ENCODE measurements at regions of chr6 and their contacts with region 1.

Region 1: GRCh38 chr6:160221423-160221822 is 37.2 kb downstream of the SLC22A2 start:
- DNase-seq: peak; percentile 54
- H3K4me3 Mint-ChIP-seq: no peak overlapping the region
- H3K27ac Mint-ChIP-seq: no peak overlapping the region
- H3K4me1 Mint-ChIP-seq: no peaks in the 10 kb centered on the region
- H3K27me3 Mint-ChIP-seq: peaks cover 17% of the 10 kb centered on the region
- CTCF ChIP-seq: peak; percentile 28

Region 2: GRCh38 chr6:160088069-160088783 is 133.2 kb before region 1 on chr6:
- CTCF ChIA-PET with region 1: interaction called, 10 read pairs
- POLR2A ChIA-PET with region 1: interaction called, 4 read pairs
- intact Hi-C with region 1: loop called (anchors 1 kb)
- DNase-seq: peak; percentile 76
- H3K4me3 Mint-ChIP-seq: no peak overlapping the region
- H3K27ac Mint-ChIP-seq: no peak overlapping the region
- H3K4me1 Mint-ChIP-seq: no peaks in the 10 kb centered on the region
- H3K27me3 Mint-ChIP-seq: no peaks in the 10 kb centered on the region
- CTCF ChIP-seq: peak; percentile 68

Region 3: GRCh38 chr6:160137989-160138835 is 83.2 kb before region 1 on chr6:
- CTCF ChIA-PET with region 1: interaction called, 19 read pairs
- POLR2A ChIA-PET with region 1: interaction called, 3 read pairs
- intact Hi-C with region 1: loop called (anchors 1 kb)
- DNase-seq: peak; percentile 73
- H3K4me3 Mint-ChIP-seq: no peak overlapping the region
- H3K27ac Mint-ChIP-seq: no peak overlapping the region
- H3K4me1 Mint-ChIP-seq: peaks cover 25% of the 10 kb centered on the region
- H3K27me3 Mint-ChIP-seq: no peaks in the 10 kb centered on the region
- CTCF ChIP-seq: peak; percentile 80

Region 4: DNA sequence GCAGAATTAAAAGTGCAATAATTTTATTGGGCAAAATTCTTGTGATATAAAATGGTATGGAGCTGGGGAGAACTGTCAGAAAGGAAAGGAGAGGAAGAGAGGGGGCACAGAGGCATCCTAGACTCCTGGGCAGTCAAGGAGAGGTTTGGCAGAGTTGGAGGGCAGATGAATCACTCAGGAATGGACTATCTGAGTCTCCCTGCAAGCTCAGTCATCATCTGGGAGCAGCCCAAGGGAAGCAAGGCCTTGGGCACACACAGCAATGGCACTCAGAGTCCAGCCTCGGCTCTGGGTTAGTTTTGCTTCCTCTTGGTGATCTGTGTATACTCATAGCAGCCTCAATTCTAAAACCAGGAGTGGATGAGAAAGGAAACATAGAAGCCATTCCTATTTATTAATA is 32.6 kb before region 1 on chr6:
- CTCF ChIA-PET with region 1: interaction called, 11 read pairs
- POLR2A ChIA-PET with region 1: no interaction called
- intact Hi-C with region 1: no loop called
- DNase-seq: peak; percentile 42
- H3K4me3 Mint-ChIP-seq: no peak overlapping the region
- H3K27ac Mint-ChIP-seq: no peak overlapping the region
- H3K4me1 Mint-ChIP-seq: no peaks in the 10 kb centered on the region
- H3K27me3 Mint-ChIP-seq: no peaks in the 10 kb centered on the region
- CTCF ChIP-seq: no peak

Region 5: GRCh38 chr6:160386869-160387530 is 165.6 kb after region 1 on chr6:
- CTCF ChIA-PET with region 1: interaction called, 6 read pairs
- POLR2A ChIA-PET with region 1: interaction called, 4 read pairs
- intact Hi-C with region 1: loop called (anchors 5 kb)
- DNase-seq: peak; percentile 95
- H3K4me3 Mint-ChIP-seq: peak overlapping the region; percentile 14
- H3K27ac Mint-ChIP-seq: peak overlapping the region; percentile 73
- H3K4me1 Mint-ChIP-seq: peaks cover 58% of the 10 kb centered on the region
- H3K27me3 Mint-ChIP-seq: no peaks in the 10 kb centered on the region
- CTCF ChIP-seq: no peak

Region 6: DNA sequence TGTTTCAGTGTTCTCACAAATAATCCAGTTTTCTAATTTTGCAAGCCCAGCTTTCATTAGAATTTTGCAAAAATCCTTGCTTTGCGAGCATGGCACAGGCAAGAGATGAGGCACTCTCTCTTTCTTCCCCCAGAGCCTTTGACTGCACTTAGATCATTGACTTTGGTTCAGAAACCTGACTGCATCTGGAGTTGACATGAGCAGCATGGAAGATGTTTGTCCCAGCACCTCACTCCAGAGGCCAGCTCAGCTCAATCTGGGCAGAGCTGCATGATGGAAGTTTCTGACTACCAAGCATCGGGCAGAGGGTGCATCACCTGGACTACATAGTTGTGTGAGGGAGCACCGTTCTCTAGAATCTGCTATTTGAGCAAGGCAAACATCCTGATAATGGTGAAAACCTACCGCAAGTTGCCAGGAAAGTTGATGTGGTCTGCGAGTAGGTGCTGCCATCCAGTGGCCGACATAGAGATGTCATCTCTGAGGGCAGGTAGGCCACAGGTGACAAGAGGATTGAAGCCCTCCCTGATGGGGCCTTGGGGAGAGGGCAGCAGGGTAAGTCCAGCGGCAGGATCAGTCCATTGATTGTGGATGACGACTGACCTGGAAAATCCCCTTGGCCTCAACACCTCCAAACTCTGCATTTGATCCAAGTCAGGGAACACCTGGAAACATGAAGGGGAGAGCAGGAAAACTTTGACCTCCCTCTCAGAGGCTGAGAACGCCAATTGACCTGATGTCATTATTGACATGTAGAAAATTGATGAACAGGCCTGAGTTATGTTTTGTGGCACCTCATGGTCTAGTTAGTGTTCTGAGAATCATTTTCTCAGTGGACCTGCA is 446.4 kb after region 1 on chr6:
- CTCF ChIA-PET with region 1: interaction called, 6 read pairs
- POLR2A ChIA-PET with region 1: no interaction called
- intact Hi-C with region 1: loop called (anchors 2 kb)
- DNase-seq: peak; percentile 53
- H3K4me3 Mint-ChIP-seq: no peak overlapping the region
- H3K27ac Mint-ChIP-seq: no peak overlapping the region
- H3K4me1 Mint-ChIP-seq: no peaks in the 10 kb centered on the region
- H3K27me3 Mint-ChIP-seq: peaks cover 27% of the 10 kb centered on the region
- CTCF ChIP-seq: peak; percentile 74

Measured in MCF 10A (cell line).